Endothelial cell of umbilical vein (primary cell): ENCODE measurements at regions of chr7 and their contacts with region 1.

Region 1: GRCh38 chr7:54773472-54774399 is 14.7 kb upstream of the SEC61G start:
- DNase-seq: peak; percentile 86
- H3K4me3 ChIP-seq: peak overlapping the region; percentile 13 to 51 (median 20)
- H3K27ac ChIP-seq: no peak overlapping the region
- H3K4me1 ChIP-seq: peaks cover 8% of the 10 kb centered on the region
- H3K27me3 ChIP-seq: peaks cover 0 to 2% of the 10 kb centered on the region in 2 experiments
- CTCF ChIP-seq: peak; percentile 77 to 85
- POLR2A ChIP-seq: no peak

Region 2: DNA sequence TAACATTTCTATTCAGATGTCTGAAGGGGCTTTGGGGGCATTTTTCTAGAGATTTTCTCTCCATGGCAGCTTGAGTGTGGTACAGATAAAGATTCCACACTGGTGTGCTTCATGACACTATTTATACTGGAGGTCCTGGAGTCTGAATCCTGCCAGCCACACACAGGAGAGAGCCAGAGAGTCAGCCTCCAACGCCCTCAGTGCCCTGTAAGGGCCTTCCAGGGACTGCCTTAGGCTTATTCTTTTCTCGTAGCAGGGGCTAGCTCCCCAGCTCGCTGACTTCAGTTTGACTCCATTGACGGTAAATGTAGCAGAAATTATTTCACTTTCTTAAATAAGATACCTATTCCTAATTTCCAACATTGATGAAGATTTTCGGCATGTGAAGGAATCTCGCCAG is 130.7 kb before region 1 on chr7:
- CTCF ChIA-PET with region 1: no interaction called
- POLR2A ChIA-PET with region 1: no interaction called
- dilution Hi-C with region 1: no loop called
- intact Hi-C with region 1: no loop called
- DNase-seq: no peak
- H3K4me3 ChIP-seq: no peak overlapping the region
- H3K27ac ChIP-seq: no peak overlapping the region
- H3K4me1 ChIP-seq: no peaks in the 10 kb centered on the region
- H3K27me3 ChIP-seq: no peaks in the 10 kb centered on the region
- CTCF ChIP-seq: no peak
- POLR2A ChIP-seq: no peak

Region 3: DNA sequence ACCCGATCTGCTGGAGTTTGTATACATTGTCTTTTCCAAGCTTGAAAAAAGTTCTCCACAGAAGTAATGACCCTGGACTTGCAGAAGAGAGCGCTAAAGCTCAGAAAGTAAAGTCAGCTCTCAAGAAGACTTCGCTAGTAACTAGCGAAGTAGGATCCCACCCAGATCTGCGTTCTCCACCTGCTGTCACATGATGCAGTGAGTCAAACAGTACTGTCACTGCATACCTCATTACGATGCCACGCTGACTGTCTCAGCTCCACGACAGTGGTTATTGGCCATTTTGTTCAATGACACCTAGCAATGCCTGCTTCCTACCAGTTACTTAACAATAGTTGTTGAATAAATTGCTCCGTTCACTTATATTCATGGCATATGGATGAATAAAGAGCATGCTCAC is 14.9 kb after region 1 on chr7:
- CTCF ChIA-PET with region 1: interaction called, 28 read pairs
- POLR2A ChIA-PET with region 1: no interaction called
- dilution Hi-C with region 1: no loop called
- intact Hi-C with region 1: no loop called
- DNase-seq: peak; percentile 78
- H3K4me3 ChIP-seq: no peak overlapping the region
- H3K27ac ChIP-seq: no peak overlapping the region
- H3K4me1 ChIP-seq: no peaks in the 10 kb centered on the region
- H3K27me3 ChIP-seq: peaks cover 9 to 23% of the 10 kb centered on the region in 2 experiments
- CTCF ChIP-seq: peak; percentile 58 to 64
- POLR2A ChIP-seq: no peak

Region 4: GRCh38 chr7:55132890-55133551 is 359.3 kb after region 1 on chr7:
- CTCF ChIA-PET with region 1: no interaction called
- POLR2A ChIA-PET with region 1: no interaction called
- dilution Hi-C with region 1: no loop called
- intact Hi-C with region 1: loop called (anchors 5 kb)
- DNase-seq: peak; percentile 95
- H3K4me3 ChIP-seq: no peak overlapping the region
- H3K27ac ChIP-seq: peak overlapping the region; percentile 97
- H3K4me1 ChIP-seq: peaks cover 42% of the 10 kb centered on the region
- H3K27me3 ChIP-seq: no peaks in the 10 kb centered on the region
- CTCF ChIP-seq: no peak
- POLR2A ChIP-seq: no peak

Region 5: DNA sequence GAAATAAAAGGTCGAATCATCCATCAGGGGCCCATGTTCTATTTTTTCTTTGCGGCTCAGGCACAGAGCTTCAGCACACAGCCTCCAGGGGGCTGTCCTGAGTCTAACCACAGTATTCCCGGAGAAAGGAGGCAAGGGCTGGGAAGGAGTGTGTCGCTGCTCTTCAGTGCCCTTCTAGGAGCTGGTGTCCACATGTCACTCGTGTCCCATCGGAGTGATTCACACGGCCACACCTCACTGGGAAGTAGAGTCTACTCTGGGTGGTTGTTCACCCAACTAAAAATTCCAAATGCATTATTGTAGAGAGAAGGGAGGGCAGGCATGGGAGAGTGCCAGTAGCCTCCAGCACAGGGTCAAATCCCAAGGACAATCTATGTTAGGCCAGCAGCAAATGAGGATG is 476.6 kb after region 1 on chr7:
- CTCF ChIA-PET with region 1: interaction called, 385 read pairs
- POLR2A ChIA-PET with region 1: no interaction called
- dilution Hi-C with region 1: loop called (anchors 10 kb)
- intact Hi-C with region 1: loop called (anchors 1 kb)
- DNase-seq: peak; percentile 27
- H3K4me3 ChIP-seq: no peak overlapping the region
- H3K27ac ChIP-seq: no peak overlapping the region
- H3K4me1 ChIP-seq: peaks cover 8% of the 10 kb centered on the region
- H3K27me3 ChIP-seq: peaks cover 27 to 33% of the 10 kb centered on the region in 2 experiments
- CTCF ChIP-seq: peak; percentile 73 to 75
- POLR2A ChIP-seq: no peak

Region 6: DNA sequence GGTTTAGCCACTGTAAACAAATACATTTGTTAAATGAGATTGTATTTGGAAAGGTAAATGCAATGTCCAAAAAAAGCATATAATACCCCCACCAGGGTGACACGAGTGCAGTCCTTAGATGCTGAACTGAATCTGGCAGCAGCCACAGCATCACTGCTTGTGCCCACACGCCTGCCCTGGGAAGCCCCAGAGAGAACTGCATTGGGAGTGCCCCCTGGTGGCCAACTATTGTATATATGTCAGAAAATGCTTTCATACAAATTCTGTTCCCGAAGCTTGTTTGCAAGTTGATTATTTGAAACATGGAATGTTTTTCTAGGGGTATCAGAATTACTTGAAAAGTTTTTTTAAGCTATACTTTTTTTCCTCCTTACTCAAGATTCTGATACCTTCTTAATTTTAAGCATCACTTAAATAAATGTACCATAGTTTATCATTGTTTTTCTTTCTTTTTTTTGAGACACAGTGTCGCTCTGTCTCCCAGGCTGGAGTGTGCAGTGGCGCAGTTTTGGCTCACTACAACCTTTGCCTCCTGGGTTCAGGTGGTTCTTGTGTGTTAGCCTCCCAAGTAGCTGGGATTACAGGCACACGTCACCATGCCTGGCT is 641.5 kb after region 1 on chr7:
- CTCF ChIA-PET with region 1: interaction called, 4 read pairs
- POLR2A ChIA-PET with region 1: no interaction called
- dilution Hi-C with region 1: no loop called
- intact Hi-C with region 1: loop called (anchors 2 kb)
- DNase-seq: peak; percentile 84
- H3K4me3 ChIP-seq: no peak overlapping the region
- H3K27ac ChIP-seq: no peak overlapping the region
- H3K4me1 ChIP-seq: peaks cover 1% of the 10 kb centered on the region
- H3K27me3 ChIP-seq: no peaks in the 10 kb centered on the region
- CTCF ChIP-seq: peak; percentile 72 to 74
- POLR2A ChIP-seq: no peak